ENCODE measurements at regions of chr2 and their contacts with region 1.

Region 1: GRCh38 chr2:233566141-233566960 is at the start of gene USP40:
- DNase-seq: peak; percentile 91 to 95
- ATAC-seq: peak; percentile 98
- H3K4me3 ChIP-seq: peak within 1 kb of the TSS; percentile 65 to 78
- H3K27ac ChIP-seq: peak within 1 kb of the TSS; percentile 43 to 81
- H3K4me1 ChIP-seq: no peaks in the 10 kb centered on the region
- H3K27me3 ChIP-seq: no peaks in the 10 kb centered on the region
- total RNA-seq, gene USP40: 28.4 to 52.6 TPM

Region 2: GRCh38 chr2:233711312-233712008 is 145.1 kb after region 1 on chr2:
- intact Hi-C with region 1: loop called in 1 of 2 experiments (anchors 5 kb)
- DNase-seq: peak; percentile 79 to 90
- ATAC-seq: peak; percentile 70
- H3K4me3 ChIP-seq: no peak overlapping the region
- H3K27ac ChIP-seq: no peak overlapping the region
- H3K4me1 ChIP-seq: no peaks in the 10 kb centered on the region
- H3K27me3 ChIP-seq: no peaks in the 10 kb centered on the region

Measured in aorta (tissue), 5 donors.